AG04449 (cell line): ENCODE measurements at regions of chr20 and their contacts with region 1.

Region 1: DNA sequence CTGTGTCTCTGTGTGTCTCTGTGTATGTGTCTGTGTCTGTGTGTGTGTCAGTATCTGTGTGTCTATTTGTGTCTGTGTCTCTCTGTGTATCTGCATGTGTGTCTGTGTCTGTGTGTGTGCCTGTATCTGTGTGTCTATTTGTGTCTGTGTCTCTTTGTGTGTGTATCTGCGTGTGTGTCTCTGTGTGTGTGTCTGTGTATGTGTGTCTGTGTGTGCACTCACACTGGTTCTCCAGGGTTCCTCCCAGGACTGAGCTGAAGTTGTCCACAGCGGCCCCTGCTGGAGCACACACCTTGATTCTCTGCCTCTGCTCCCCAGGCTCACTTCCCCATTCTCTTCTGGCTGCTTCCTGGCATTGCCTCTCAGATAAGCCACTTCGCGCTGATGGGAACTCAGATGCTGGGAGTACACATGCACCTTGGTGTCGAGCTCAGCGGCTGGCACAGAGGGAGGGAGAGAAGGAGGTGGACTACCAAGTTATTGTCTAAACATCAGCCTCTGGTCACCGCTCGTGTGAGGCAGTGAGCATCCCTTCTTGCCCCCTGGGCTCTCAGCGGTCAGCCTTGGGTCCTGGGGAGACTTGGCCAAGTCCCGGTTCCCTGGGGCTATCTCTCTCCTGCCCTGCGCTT is 104.9 kb upstream of the NXT1 start:
- DNase-seq: no peak
- H3K4me3 ChIP-seq: no peak overlapping the region
- CTCF ChIP-seq: peak; percentile 65

Region 2: GRCh38 chr20:22371843-22372242 is 873.8 kb before region 1 on chr20:
- CTCF ChIA-PET with region 1: no interaction called
- POLR2A ChIA-PET with region 1: no interaction called
- DNase-seq: no peak
- H3K4me3 ChIP-seq: no peak overlapping the region
- CTCF ChIP-seq: no peak

Region 3: DNA sequence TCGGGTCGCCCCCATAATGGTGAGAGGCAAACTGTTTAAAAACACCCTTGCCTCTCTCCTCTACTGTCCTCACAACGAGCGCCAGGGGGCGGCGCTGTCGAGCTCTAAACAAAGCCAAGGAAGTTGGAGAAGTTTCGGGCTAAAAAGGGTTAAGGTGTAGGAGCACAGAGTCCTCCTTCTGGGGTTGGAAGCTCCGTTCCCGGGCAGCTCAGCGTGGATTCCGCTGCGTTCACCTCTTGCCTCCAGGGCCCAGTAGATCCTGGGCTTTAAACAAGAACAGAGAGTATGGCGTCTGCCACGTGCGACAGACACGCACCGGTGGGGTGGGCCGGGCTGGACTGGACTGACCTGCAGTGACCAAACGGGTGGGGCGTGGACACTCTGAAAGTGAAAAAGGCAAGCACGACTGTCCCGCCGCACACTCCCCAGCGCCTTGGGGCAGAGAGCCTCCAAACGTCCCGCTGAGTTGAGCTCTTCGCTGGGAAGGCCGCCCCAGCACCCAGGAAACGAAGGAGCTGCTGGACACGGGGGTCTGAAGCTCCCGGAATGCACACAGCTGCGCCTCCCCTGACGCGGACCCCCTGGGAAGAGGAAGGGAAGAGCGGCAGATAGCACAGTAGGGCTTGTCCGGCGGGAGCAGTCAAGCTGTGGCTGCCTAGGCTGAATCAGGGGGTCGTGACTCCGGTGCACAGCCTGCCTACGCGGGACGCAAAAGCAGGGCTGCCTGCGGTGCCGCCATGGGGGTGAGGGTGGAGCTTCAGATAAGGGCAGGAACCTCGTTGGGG is 194.6 kb before region 1 on chr20:
- CTCF ChIA-PET with region 1: interaction called, 10 read pairs
- POLR2A ChIA-PET with region 1: no interaction called
- DNase-seq: no peak
- H3K4me3 ChIP-seq: peak overlapping the region; percentile 60
- CTCF ChIP-seq: peak; percentile 78

Region 4: DNA sequence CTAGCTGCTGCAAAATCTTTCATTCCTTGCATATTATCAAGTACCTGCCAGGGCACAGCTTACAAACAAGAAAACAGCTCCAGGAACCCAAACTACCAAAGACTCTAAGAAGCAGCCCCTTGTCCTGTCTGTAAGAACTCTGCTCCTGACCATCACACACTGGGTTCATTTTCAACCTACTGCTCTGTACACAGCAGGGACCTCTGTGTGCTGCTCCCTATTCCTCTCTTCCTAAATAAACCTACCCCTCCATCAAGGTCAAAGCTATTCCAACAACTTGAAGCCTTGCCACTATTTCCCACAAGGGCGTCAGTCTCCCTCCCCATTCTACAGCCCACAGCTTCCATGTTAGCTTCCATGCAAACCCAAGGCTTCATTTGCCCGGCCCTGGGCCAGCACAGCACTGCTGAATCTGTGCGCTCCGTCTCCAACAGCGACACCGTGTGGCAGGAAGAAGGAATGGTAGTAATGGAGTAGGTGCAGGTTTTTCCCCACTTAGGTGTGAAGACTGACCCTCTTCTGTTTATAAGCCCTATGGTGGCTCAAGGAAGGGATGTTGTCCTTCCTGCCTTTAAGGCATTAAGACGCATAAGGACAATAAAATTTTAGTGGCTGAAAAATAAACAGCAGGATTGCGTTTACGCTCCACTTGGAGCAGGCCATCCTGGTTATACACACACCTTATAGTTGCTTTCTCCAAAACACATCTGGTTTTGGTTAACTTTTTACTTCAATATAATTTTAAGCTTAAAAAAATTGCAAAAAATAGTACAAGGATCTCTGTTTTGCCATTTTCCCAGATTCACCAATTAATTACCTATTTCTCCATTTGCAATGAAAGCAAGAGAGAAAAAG is 10.3 kb before region 1 on chr20:
- CTCF ChIA-PET with region 1: interaction called, 26 read pairs
- POLR2A ChIA-PET with region 1: no interaction called
- DNase-seq: no peak
- H3K4me3 ChIP-seq: no peak overlapping the region
- CTCF ChIP-seq: peak; percentile 75

Region 5: DNA sequence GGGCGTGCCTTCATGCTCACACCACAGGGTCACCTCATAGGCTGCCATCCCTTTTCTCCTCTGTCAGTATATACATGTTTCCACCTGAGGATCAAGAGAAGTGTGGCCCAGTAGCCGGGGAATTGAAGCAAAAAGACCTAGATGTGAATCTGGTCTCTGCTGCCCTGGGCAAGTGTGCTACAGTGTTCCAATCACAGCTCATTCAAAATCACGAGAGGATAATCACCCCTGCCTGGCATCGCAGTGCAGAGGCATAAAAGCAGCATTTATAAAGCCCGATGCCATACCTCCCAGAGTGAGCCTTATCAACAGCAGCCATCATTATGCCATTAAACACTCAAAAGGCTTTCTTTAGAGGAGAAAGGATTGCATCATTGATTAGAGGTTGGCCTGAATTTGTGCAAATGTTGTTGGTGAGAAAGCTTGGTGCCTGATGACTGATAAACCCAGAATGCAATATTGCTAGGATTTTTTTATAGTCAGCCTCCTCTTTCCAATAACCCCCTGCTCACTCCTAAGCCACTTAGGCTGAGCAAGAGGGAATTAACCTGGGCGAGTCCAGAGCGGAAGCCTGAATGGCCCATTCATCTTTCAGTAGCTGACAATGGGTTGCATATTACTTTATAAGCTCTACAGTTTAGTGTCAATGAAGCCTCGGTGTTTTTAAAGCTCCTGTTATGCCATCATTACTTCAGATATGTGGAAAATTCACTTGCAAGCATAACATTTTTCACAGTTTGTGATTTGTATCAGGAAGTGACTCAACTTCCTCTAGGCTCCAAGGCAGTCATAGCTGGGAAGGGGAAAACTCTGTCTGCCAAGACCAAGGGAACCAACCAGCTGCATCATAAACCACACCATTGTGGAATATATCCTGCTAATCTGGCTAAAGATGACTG is 12.4 kb after region 1 on chr20:
- CTCF ChIA-PET with region 1: interaction called, 27 read pairs
- POLR2A ChIA-PET with region 1: no interaction called
- DNase-seq: peak; percentile 46
- H3K4me3 ChIP-seq: no peak overlapping the region
- CTCF ChIP-seq: no peak

Region 6: GRCh38 chr20:23340524-23340923 is 94.9 kb after region 1 on chr20:
- CTCF ChIA-PET with region 1: interaction called, 17 read pairs
- POLR2A ChIA-PET with region 1: no interaction called
- DNase-seq: peak; percentile 21
- H3K4me3 ChIP-seq: no peak overlapping the region
- CTCF ChIP-seq: peak; percentile 71

Region 7: DNA sequence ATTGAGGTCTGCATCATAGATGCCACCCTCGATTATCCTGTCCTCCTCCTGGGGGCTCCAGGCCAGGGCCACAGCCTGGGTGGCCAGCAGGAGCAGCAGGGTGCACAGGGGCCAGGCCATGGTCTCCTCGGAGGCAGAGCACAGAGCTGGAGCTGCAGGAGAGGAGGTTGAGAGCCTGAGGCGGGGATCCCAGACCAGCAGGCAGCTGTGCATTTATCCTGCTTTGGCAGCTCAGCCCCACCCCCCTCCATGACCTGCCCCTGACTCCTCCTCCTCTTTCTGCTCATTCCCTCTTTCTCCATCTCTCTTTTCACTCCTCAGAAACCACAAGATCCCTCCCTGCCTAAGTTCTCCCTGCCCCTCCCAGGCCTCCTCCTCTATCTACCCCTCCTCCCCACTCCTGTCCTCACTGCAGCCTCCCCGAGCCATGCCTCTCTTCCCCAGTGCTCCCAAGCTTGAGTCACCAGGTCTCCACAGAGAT is 580.9 kb after region 1 on chr20 and contains the start of gene CST2:
- CTCF ChIA-PET with region 1: no interaction called
- POLR2A ChIA-PET with region 1: no interaction called
- DNase-seq: no peak
- H3K4me3 ChIP-seq: no peak within 1 kb of the TSS
- CTCF ChIP-seq: no peak